ENCODE measurements at regions of chr17 and their contacts with region 1.

Region 1: GRCh38 chr17:39916918-39917317 is 1.5 kb downstream of the GSDMB start:
- DNase-seq: no peak
- ATAC-seq: no peak
- H3K4me3 ChIP-seq: no peak overlapping the region
- H3K27ac ChIP-seq: no peak overlapping the region
- H3K4me1 ChIP-seq: peaks cover 33% of the 10 kb centered on the region
- H3K27me3 ChIP-seq: no peaks in the 10 kb centered on the region
- CTCF ChIP-seq: no peak
- EP300 ChIP-seq: no peak
- POLR2A ChIP-seq: no peak
- RAD21 ChIP-seq: no peak

Region 2: DNA sequence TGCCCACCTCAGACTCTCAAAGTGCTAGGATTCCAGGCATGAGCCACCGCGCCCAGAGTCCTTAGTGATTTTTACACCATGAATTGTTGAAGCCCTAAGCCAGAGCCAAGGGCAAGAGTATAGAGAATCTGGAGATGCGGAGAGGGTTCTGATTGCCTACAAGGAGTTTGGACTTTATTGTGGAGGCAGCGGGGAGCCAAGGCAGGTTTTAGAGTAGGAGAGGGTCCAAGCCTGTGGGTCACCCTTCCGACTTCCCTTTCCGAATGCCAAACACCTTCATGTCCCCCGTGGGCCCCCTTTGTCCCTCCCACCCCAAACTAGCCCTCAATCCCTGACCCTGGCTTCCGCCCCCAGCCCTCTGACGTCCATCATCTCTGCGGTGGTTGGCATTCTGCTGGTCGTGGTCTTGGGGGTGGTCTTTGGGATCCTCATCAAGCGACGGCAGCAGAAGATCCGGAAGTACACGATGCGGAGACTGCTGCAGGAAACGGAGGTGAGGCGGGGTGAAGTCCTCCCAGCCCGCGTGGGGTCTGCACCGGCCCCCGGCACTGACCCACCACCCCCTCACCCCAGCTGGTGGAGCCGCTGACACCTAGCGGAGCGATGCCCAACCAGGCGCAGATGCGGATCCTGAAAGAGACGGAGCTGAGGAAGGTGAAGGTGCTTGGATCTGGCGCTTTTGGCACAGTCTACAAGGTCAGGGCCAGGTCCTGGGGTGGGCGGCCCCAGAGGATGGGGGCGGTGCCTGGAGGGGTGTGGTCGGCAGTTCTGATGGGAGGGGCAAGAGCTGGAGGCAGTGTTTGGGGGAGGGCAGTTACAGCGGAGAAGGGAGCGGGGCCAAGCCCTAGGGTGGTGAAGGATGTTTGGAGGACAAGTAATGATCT is 193.7 kb before region 1 on chr17:
- CTCF ChIA-PET with region 1: no interaction called
- POLR2A ChIA-PET with region 1: no interaction called
- RAD21 ChIA-PET with region 1: no interaction called
- SMC1A ChIA-PET with region 1: no interaction called
- in situ Hi-C with region 1: no loop called
- intact Hi-C with region 1: no loop called
- DNase-seq: no peak
- ATAC-seq: peak; percentile 69
- H3K4me3 ChIP-seq: no peak overlapping the region
- H3K27ac ChIP-seq: no peak overlapping the region
- H3K4me1 ChIP-seq: no peaks in the 10 kb centered on the region
- H3K27me3 ChIP-seq: no peaks in the 10 kb centered on the region
- CTCF ChIP-seq: no peak
- EP300 ChIP-seq: no peak
- POLR2A ChIP-seq: no peak
- RAD21 ChIP-seq: no peak

Region 3: GRCh38 chr17:39889200-39889599 is 27.7 kb before region 1 on chr17:
- CTCF ChIA-PET with region 1: no interaction called
- POLR2A ChIA-PET with region 1: interaction called, 11 read pairs
- RAD21 ChIA-PET with region 1: no interaction called
- SMC1A ChIA-PET with region 1: interaction called, 3 read pairs
- in situ Hi-C with region 1: no loop called
- intact Hi-C with region 1: no loop called
- DNase-seq: no peak
- ATAC-seq: no peak
- H3K4me3 ChIP-seq: no peak overlapping the region
- H3K27ac ChIP-seq: no peak overlapping the region
- H3K4me1 ChIP-seq: no peaks in the 10 kb centered on the region
- H3K27me3 ChIP-seq: no peaks in the 10 kb centered on the region
- CTCF ChIP-seq: no peak
- EP300 ChIP-seq: no peak
- POLR2A ChIP-seq: no peak
- RAD21 ChIP-seq: no peak

Region 4: GRCh38 chr17:39903158-39903884 is 13.6 kb before region 1 on chr17:
- CTCF ChIA-PET with region 1: interaction called, 8 read pairs
- POLR2A ChIA-PET with region 1: interaction called, 7 read pairs
- RAD21 ChIA-PET with region 1: interaction called, 4 read pairs
- SMC1A ChIA-PET with region 1: interaction called, 22 read pairs
- in situ Hi-C with region 1: no loop called
- intact Hi-C with region 1: no loop called
- DNase-seq: no peak
- ATAC-seq: peak; percentile 87
- H3K4me3 ChIP-seq: no peak overlapping the region
- H3K27ac ChIP-seq: peak overlapping the region; percentile 13; the same call in 1 of the 2 replicates
- H3K4me1 ChIP-seq: no peaks in the 10 kb centered on the region; the same call in 1 of the 2 replicates
- H3K27me3 ChIP-seq: no peaks in the 10 kb centered on the region
- CTCF ChIP-seq: no peak
- EP300 ChIP-seq: no peak
- POLR2A ChIP-seq: no peak
- RAD21 ChIP-seq: no peak

Region 5: DNA sequence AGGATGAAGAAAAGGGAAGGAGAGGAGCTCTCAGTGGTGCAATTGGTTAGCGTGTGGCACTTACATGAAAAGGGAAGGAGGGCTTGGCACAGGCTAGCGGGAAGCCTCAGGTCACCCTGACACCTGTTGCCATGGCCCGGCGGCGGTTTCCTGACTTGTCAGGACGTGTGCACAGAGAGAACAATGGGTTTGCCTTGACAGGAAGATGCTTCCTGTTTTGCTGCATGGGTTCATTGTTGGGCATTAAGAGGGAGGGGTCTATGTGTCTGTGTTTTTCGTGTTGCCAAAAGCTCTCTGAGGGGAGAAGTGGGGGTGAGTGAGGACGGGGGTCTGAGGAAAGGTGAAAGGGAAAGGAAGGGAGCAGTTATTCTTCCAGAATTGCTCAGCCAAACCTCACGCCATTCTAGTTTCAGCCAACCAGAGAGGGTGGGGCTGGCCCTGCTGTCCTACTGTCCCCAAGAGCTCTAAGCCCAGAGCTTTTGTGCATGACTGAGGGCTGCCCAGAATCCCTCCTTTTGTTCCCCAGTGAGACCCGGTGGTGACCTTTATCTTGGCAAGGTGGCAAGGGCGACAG is 665.5 kb after region 1 on chr17:
- CTCF ChIA-PET with region 1: no interaction called
- POLR2A ChIA-PET with region 1: no interaction called
- RAD21 ChIA-PET with region 1: no interaction called
- SMC1A ChIA-PET with region 1: no interaction called
- in situ Hi-C with region 1: no loop called
- intact Hi-C with region 1: no loop called
- DNase-seq: peak; percentile 99
- ATAC-seq: peak; percentile 87
- H3K4me3 ChIP-seq: no peak overlapping the region
- H3K27ac ChIP-seq: no peak overlapping the region
- H3K4me1 ChIP-seq: peaks cover 28% of the 10 kb centered on the region
- H3K27me3 ChIP-seq: peaks cover 0 to 4% of the 10 kb centered on the region in 2 experiments; a peak in 1 of 4 replicates
- CTCF ChIP-seq: no peak
- EP300 ChIP-seq: peak; percentile 59 to 60; a peak in 2 of 4 replicates
- POLR2A ChIP-seq: no peak
- RAD21 ChIP-seq: 0 out of 2 replicates have a peak, but pooled peaks have one; percentile 4